K562 (cell line): ENCODE measurements at regions of chr1 and their contacts with region 1.

Region 1: DNA sequence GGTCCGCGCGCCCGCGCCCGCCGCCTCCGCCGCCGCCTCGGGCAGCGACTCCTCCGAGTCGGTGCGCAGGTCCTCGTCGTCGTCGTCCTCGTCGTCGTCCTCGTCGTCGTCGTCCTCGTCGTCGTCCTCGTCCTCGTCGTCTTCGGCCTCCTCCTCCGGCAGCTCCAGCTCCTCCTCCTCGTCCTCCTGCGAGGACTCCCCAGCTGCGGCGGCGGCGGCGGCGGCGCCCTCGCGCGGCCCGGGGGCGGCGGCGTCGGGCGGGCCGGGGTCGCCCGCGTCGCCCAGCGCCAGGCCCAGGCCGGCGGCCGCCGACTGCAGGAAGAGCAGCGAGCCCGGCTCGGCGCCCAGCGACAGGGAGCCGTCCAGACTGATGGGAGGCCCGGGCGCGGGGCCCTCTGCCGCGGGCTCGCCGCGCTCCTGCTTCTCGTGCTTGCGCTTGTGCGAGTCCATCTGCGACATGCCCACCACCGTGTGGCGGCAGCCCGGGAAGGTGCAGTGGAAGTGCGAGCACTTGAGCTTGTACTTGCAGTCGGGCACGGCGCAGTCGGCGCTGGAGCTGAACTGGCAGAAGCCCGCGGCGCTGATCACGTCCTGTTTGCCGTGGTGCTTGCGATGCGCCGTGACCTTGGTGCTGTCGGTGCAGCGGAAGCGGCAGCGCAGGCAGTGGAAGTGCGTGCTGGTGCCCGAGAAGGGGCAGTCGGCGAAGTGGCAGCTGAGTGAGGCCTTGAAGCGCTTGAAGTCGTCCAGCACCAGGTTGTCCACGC is 157.3 kb downstream of the CASZ1 start:
- DNase-seq: no peak
- ATAC-seq: no peak
- H3K4me3 ChIP-seq: no peak overlapping the region
- H3K27ac ChIP-seq: no peak overlapping the region
- H3K4me1 ChIP-seq: peaks cover 0 to 70% of the 10 kb centered on the region in 2 experiments; a peak in 2 of 5 replicates
- H3K27me3 ChIP-seq: peaks cover 11 to 25% of the 10 kb centered on the region in 2 experiments; a peak in 4 of 5 replicates
- CTCF ChIP-seq: no peak
- EP300 ChIP-seq: no peak
- POLR2A ChIP-seq: no peak
- RAD21 ChIP-seq: no peak

Region 2: DNA sequence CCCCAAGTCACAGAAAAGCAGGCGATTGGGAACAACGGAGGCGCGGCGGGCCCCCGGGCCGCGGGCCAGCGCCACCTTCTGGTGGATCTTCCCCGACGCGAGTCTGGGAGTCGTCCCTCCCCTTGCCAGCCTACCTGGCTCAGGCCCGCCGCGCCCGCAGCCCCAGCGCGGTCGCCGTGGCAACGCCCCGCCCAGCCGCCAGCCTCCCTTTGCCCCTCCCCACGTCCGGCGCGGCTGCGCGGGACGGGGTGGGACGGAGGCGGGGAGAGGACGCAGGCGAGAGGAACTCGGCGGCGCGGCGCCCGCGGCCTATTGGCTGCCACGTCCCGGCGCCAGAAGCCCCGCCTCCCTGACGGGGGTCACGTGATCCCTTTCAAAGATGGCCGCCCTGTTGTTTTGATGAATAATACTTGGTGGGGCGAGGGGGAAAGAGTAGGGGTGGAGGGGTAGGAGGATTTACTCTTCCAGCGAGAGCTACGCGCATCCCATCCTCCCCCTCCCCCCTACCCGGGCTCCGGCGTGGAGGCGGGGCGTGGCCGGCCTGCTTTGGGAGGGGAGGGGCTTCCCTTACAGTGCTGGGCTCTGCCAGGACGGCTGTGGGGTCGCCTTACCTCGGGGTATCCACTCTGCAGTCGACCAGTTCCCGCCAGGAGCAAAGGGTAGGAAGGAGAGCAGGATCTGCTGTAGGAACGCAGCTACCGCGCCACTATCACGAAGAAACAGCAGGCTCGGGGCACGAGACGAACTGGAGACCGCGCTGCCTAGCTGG is 606.4 kb before region 1 on chr1 and contains the start of gene UBE4B:
- CTCF ChIA-PET with region 1: no interaction called
- POLR2A ChIA-PET with region 1: no interaction called
- in situ Hi-C with region 1: no loop called
- intact Hi-C with region 1: no loop called
- DNase-seq: peak; percentile 98 to 99 (median 99)
- ATAC-seq: peak; percentile 93
- H3K4me3 ChIP-seq: peak within 1 kb of the TSS; percentile 62
- H3K27ac ChIP-seq: peak within 1 kb of the TSS; percentile 97
- H3K4me1 ChIP-seq: peaks cover 3 to 14% of the 10 kb centered on the region in 2 experiments; a peak in 2 of 5 replicates
- H3K27me3 ChIP-seq: no peaks in the 10 kb centered on the region
- CTCF ChIP-seq: peak; percentile 91 to 98 (median 95)
- EP300 ChIP-seq: peak; percentile 53; the same call in 1 of the 2 replicates
- POLR2A ChIP-seq: peak; percentile 89
- RAD21 ChIP-seq: peak; percentile 81 to 84
- polyA plus RNA-seq, gene UBE4B: 11.7 to 24.9 TPM

Region 3: DNA sequence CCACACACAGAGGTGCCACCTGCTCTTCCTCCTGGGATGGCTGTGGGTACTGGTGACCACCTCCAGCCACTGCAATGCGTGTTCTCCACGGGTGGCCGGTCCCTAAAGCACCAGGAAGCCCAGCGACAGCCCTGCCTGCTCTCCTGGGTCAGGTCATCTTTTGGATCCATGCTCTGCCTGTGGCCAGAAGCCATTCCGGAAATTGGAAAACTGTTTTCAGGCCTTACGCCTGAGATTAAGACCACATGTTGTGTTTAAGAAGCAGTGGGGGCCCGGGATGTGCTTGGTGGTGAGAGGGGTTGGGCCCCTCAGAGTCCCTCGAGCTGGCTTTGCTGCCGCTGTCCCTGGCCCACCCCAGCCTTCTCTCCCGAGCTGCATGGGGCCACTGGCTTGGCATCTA is 13.6 kb before region 1 on chr1:
- CTCF ChIA-PET with region 1: no interaction called
- POLR2A ChIA-PET with region 1: interaction called, 11 read pairs
- in situ Hi-C with region 1: no loop called
- intact Hi-C with region 1: no loop called
- DNase-seq: no peak
- ATAC-seq: no peak
- H3K4me3 ChIP-seq: no peak overlapping the region
- H3K27ac ChIP-seq: no peak overlapping the region
- H3K4me1 ChIP-seq: peaks cover 0 to 10% of the 10 kb centered on the region in 2 experiments; a peak in 1 of 5 replicates
- H3K27me3 ChIP-seq: no peaks in the 10 kb centered on the region
- CTCF ChIP-seq: no peak
- EP300 ChIP-seq: no peak
- POLR2A ChIP-seq: no peak
- RAD21 ChIP-seq: no peak